PC-9 (cell line): ENCODE measurements at regions of chr17 and their contacts with region 1.

Region 1: DNA sequence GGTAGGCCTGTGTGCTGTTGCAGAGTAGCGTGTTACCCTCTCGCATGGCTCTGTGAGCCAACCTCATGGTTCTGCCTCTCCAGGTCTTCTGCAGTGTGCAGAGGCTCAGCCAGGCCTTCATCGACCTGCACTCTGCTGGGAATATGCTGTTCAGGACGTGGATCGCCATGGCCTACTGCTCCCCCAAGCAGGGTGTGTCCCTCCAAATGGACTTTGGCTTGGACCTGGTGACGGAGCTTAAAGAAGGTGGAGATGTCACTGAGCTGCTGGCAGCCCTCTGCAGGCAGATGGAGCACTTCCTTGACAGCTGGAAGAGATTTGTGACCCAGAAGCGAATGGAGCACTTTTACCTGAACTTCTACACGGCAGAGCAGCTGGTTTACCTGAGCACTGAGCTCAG is 75.8 kb upstream of the ENDOV start:
- DNase-seq: no peak
- H3K4me3 ChIP-seq: no peak overlapping the region
- H3K27ac ChIP-seq: no peak overlapping the region
- H3K4me1 ChIP-seq: no peaks in the 10 kb centered on the region
- H3K27me3 ChIP-seq: no peaks in the 10 kb centered on the region
- CTCF ChIP-seq: no peak

Region 2: DNA sequence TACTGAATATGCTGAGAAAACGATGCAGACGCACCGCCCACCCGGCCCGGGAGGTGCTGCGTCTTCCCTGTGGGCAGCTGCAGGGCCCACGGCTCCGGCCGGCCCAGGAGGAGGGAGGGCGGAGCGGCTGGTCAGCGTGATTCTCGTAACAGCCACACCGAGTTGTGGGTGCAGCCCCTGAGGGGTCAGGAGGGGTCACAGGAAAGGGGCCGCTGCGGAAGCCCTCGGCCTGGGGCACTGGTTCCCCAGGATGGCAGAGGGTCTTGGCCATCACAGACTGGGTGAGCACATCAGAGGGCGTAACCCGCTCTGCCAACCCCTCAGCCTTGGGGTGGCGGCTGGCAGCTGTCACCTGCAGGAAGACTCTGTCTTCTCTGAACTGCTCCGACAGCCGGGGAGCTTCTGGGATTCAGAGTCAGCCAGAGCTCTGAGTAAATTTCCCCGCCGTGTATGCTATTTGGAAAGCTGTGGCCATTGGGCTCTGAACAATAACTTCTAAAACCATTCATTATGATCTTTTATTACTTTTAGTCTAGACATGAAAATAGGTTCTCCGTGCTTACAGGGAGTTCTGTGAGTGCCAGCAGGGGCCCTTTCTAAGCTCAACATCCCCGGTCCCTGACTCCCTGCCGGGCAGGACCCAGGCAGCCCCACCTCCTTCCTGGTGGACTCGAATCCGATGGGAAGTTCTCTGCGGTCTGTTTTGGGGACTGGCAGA is 565.1 kb after region 1 on chr17:
- CTCF ChIA-PET with region 1: interaction called, 11 read pairs
- POLR2A ChIA-PET with region 1: no interaction called
- intact Hi-C with region 1: no loop called
- DNase-seq: no peak
- H3K4me3 ChIP-seq: no peak overlapping the region
- H3K27ac ChIP-seq: no peak overlapping the region
- H3K4me1 ChIP-seq: no peaks in the 10 kb centered on the region
- H3K27me3 ChIP-seq: no peaks in the 10 kb centered on the region
- CTCF ChIP-seq: no peak